ENCODE measurements at regions of chr10 and their contacts with region 1.

Region 1: GRCh38 chr10:28250782-28251181 is 52.1 kb downstream of the MPP7 start:
- DNase-seq: no peak
- ATAC-seq: peak; percentile 47
- H3K4me3 ChIP-seq: no peak overlapping the region
- H3K27ac ChIP-seq: no peak overlapping the region
- H3K4me1 ChIP-seq: peaks cover 15% of the 10 kb centered on the region
- H3K27me3 ChIP-seq: no peaks in the 10 kb centered on the region
- CTCF ChIP-seq: peak; percentile 20 to 76 (median 68)
- POLR2A ChIP-seq: no peak

Region 2: DNA sequence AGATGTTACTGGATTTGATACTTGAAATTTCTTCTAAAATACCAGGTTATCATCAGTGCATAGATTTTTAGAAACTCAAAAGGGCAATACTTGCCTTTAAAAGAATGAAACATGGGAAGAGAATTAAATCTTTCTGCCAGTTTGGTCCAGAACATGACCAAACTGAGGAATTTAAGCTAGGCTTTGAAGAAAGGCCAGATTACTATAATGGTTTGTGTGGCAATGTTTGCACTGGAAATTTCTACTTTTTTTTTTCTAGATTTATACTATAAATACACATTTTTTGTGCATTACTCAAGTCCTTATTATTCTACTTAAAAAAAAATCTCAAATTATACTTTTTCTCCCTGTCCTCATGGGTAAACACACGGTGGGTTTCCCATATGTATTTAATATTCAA is 514.4 kb before region 1 on chr10:
- intact Hi-C with region 1: loop called (anchors 5 kb)
- DNase-seq: no peak
- ATAC-seq: no peak
- H3K4me3 ChIP-seq: no peak overlapping the region
- H3K27ac ChIP-seq: no peak overlapping the region
- H3K4me1 ChIP-seq: peaks cover 3% of the 10 kb centered on the region
- H3K27me3 ChIP-seq: no peaks in the 10 kb centered on the region
- CTCF ChIP-seq: no peak
- POLR2A ChIP-seq: no peak

Region 3: GRCh38 chr10:28054228-28054837 is 196.4 kb before region 1 on chr10:
- intact Hi-C with region 1: no loop called
- DNase-seq: no peak
- ATAC-seq: no peak
- H3K4me3 ChIP-seq: no peak overlapping the region
- H3K27ac ChIP-seq: no peak overlapping the region
- H3K4me1 ChIP-seq: no peaks in the 10 kb centered on the region
- H3K27me3 ChIP-seq: no peaks in the 10 kb centered on the region
- CTCF ChIP-seq: no peak
- POLR2A ChIP-seq: no peak

Region 4: DNA sequence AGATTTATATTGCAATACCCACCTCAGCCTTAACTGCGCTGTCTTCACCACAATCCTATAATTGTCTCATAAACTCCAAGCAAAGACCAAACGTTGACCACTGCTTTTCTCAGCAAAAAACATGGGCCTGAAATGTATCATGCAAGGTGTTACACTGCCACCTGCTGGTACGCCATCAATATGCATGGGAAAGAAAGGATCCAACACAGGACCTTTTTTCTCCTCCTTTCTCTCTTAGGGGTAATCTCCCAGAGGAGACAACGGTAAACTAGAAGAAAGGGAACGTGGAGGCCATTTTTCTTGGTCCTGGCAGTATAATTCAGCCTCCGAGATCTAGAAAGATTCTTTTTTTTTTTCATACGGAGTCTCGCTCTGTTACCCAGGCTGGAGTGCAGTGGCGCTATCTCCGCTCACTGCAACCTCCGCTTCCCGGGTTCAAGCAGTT is 131.1 kb after region 1 on chr10:
- intact Hi-C with region 1: loop called (anchors 5 kb)
- DNase-seq: peak; percentile 90 to 94 (median 92)
- ATAC-seq: peak; percentile 98
- H3K4me3 ChIP-seq: no peak overlapping the region
- H3K27ac ChIP-seq: no peak overlapping the region
- H3K4me1 ChIP-seq: peaks cover 5% of the 10 kb centered on the region
- H3K27me3 ChIP-seq: no peaks in the 10 kb centered on the region
- CTCF ChIP-seq: peak; percentile 88 to 99 (median 99)
- POLR2A ChIP-seq: no peak